Activated CD4-positive, alpha-beta T cell treated with anti-CD3 and anti-CD28 coated beads, Interleukin-2, amount 10 ng/mL, durations not matched to agents 24 days and 14 days (primary cell): ENCODE measurements at regions of chr6 and their contacts with region 1.

Region 1: DNA sequence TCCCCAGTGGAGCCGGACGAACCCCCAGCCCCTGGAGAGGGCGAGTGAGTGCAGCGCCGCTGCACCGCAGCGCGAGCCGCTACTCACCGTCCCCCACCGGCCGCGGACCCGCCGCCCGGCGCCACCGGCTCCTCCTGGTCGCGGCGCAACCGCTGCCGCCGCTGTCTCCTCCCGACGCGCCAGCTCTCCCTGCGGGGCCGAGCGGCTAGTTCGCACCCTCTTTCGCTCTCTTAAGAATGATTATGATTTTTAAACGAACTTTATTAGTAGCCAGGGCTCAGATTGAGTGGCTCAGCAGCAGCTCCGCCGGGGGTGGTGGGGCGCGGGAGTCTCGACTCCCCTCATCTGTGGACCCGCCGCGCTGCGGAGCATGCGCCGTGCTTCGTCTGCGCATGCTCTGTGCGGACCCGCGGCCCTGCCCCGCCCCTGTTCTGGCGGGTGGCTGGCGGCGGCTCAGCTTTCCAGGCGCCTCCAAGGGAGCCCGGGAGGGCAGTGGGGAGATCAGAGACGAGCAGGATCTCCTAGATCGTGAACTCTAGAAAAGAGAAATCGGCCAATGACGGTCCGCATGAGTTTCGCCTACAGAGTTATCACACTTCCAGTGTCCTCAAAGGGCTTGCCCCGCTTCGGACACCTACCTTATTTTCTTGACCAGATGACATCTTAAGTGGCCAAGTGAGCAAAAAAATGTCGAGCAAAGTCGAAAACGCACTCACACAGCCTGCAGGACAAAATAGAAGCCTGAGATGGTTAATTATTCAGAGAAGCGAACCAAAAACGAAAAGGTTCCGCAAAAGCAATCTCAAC is at the start of gene RAB23:
- DNase-seq: peak; percentile 97
- H3K4me3 Mint-ChIP-seq: peak within 1 kb of the TSS; percentile 93
- H3K27ac Mint-ChIP-seq: peak within 1 kb of the TSS; percentile 92
- H3K4me1 Mint-ChIP-seq: peaks cover 13% of the 10 kb centered on the region
- H3K27me3 Mint-ChIP-seq: peaks cover 37% of the 10 kb centered on the region
- total RNA-seq, gene RAB23: 3.0 and 4.0 TPM in 2 replicates

Region 2: DNA sequence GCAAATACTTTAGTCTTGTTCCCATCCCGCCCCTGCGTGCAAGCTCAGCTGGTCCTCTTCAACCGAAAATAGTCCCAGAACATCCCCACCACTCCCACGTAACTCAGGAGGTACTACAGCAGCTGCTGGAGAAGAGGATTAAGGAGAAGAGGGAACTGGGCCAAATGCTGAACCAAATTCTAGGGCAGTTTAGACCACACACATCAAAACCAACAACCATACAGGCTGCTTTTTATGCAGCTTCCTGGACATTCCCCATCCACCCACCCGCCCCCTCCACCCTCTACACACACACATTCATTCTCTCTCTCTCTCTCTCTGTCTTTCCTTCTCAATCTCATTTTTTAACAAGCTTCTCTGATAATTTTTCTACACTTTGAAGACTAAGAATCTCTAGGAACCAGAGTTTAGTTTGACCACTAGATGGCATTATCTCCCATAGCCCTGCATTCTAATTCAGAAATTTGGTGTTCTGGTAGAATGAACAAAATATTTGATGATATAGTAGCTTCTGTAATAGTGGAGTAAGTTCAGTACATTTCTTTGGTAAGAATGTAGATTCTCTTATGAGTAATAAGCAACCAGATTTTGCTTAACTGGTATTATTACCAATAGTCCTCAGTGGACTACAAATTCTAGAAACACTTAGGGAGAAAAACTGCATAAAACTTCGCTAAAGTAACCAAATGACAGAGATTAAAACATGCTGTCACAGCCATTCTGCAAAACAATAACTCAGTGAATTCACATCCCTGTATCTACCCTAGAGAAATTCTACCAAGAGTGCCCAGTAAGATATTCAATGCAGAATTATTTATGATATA is 319.3 kb before region 1 on chr6:
- intact Hi-C with region 1: loop called (anchors 10 kb)
- DNase-seq: no peak
- H3K4me3 Mint-ChIP-seq: no peak overlapping the region
- H3K27ac Mint-ChIP-seq: no peak overlapping the region
- H3K4me1 Mint-ChIP-seq: peaks cover 2% of the 10 kb centered on the region
- H3K27me3 Mint-ChIP-seq: peaks cover 17% of the 10 kb centered on the region

Region 3: GRCh38 chr6:57048577-57048976 is 173.6 kb before region 1 on chr6:
- intact Hi-C with region 1: loop called (anchors 2 kb)
- DNase-seq: no peak
- H3K4me3 Mint-ChIP-seq: peak overlapping the region; percentile 81
- H3K27ac Mint-ChIP-seq: no peak overlapping the region
- H3K4me1 Mint-ChIP-seq: peaks cover 21% of the 10 kb centered on the region
- H3K27me3 Mint-ChIP-seq: peaks cover 22% of the 10 kb centered on the region

Region 4: GRCh38 chr6:57089687-57090460 is 132.3 kb before region 1 on chr6 and contains the start of gene ZNF451:
- intact Hi-C with region 1: loop called (anchors 1 kb)
- DNase-seq: peak; percentile 99
- H3K4me3 Mint-ChIP-seq: peak within 1 kb of the TSS; percentile 70
- H3K27ac Mint-ChIP-seq: peak within 1 kb of the TSS; percentile 70
- H3K4me1 Mint-ChIP-seq: peaks cover 27% of the 10 kb centered on the region
- H3K27me3 Mint-ChIP-seq: no peaks in the 10 kb centered on the region
- total RNA-seq, gene ZNF451: 58.1 and 61.2 TPM in 2 replicates